ENCODE measurements at regions of chr9 and their contacts with region 1.

Region 1: GRCh38 chr9:292914-293313 is 78.2 kb downstream of the DOCK8 start:
- DNase-seq: no peak
- H3K4me3 ChIP-seq: no peak overlapping the region
- H3K27ac ChIP-seq: no peak overlapping the region
- H3K4me1 ChIP-seq: peaks cover 7% of the 10 kb centered on the region; the same call in 1 of the 2 replicates
- H3K27me3 ChIP-seq: no peaks in the 10 kb centered on the region
- CTCF ChIP-seq: no peak

Region 2: GRCh38 chr9:257957-258356 is 35.0 kb before region 1 on chr9:
- CTCF ChIA-PET with region 1: interaction called, 12 read pairs
- POLR2A ChIA-PET with region 1: no interaction called
- intact Hi-C with region 1: no loop called
- DNase-seq: peak in 1 of 2 experiments; percentile 37
- H3K4me3 ChIP-seq: no peak overlapping the region
- H3K27ac ChIP-seq: no peak overlapping the region
- H3K4me1 ChIP-seq: no peaks in the 10 kb centered on the region
- H3K27me3 ChIP-seq: no peaks in the 10 kb centered on the region
- CTCF ChIP-seq: no peak